Mucosa of descending colon (tissue), 3 donors: ENCODE measurements at regions of chr4 and their contacts with region 1.

Region 1: DNA sequence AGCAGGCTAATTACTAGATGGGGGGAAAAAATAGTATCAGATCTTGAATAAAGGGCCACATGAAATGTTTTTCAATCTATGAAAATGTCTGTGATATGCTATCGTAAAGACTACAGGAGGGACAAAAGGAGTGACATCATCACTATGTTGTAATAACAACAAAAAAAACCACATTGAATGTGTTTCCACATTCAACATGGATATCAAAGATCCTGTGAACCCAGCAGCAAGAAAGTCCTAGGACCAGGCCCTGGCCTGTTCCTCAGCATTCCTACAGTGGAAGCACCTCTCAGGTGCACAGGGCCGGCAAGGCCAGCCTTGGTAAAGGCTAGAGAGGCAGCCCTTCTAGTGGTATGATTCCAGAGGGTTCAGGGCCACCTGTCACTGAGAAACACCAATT is 118.3 kb downstream of the RELL1 start:
- DNase-seq: no peak
- ATAC-seq: no peak
- H3K4me3 ChIP-seq: no peak overlapping the region
- H3K4me1 ChIP-seq: no peaks in the 10 kb centered on the region
- CTCF ChIP-seq: no peak

Region 2: GRCh38 chr4:37008199-37008598 is 559.6 kb before region 1 on chr4:
- intact Hi-C with region 1: no loop called
- DNase-seq: peak; percentile 54 to 87 (median 59)
- ATAC-seq: peak; percentile 100
- H3K4me3 ChIP-seq: no peak overlapping the region
- H3K4me1 ChIP-seq: no peaks in the 10 kb centered on the region
- CTCF ChIP-seq: no peak

Region 3: GRCh38 chr4:37452952-37453280 is 114.9 kb before region 1 on chr4:
- intact Hi-C with region 1: loop called in 1 of 2 experiments (anchors 5 kb)
- DNase-seq: peak in 1 of 3 donors; percentile 94
- ATAC-seq: peak; percentile 84
- H3K4me3 ChIP-seq: no peak overlapping the region
- H3K4me1 ChIP-seq: no peaks in the 10 kb centered on the region
- CTCF ChIP-seq: no peak